Activated T-helper 1 cell treated with anti-CD3 and anti-CD28 coated beads, Interleukin-12 subunit alpha, Interleukin-12 subunit beta, Interleukin-2, Interleukin-4 antibody, amounts not matched to agents 30 ng/mL and 10 ng/mL and 1 ng/mL, durations not matched to agents 14 hours and 24 hours and 36 hours (primary cell): ENCODE measurements at regions of chr17 and their contacts with region 1.

Region 1: GRCh38 chr17:979538-980405 is at the start of gene NXN:
- DNase-seq: peak; percentile 81
- H3K4me3 Mint-ChIP-seq: peak within 1 kb of the TSS; percentile 78
- H3K27ac Mint-ChIP-seq: peak within 1 kb of the TSS; percentile 55
- H3K4me1 Mint-ChIP-seq: peaks cover 14% of the 10 kb centered on the region
- H3K27me3 Mint-ChIP-seq: peaks cover 33% of the 10 kb centered on the region
- total RNA-seq, gene NXN: 0.24 and 0.31 TPM in 2 replicates

Region 2: DNA sequence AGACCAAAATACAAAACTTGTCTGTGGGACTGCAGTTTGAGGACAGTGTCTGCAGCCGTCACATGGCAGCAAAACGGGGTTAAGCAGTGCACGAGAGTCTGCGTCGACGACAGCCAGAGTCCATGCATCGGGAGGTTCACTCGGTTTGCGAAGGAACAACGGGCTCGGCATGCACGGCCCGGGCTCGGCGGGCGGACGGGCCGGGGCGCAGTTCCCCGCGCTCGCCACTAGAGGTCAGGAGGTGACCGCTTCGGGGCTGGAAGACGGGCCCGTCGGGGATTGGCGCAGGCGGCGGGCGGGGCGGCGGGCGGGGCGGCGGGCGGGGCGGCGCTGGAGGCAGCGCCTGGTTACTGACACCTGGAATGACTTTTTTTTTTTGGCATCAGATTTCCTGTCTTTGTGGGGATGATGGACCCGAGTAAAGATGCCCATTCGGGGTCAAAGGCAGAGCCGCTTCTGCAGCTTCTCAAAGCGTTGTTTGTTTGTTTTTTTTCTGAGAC is 835.9 kb before region 1 on chr17:
- intact Hi-C with region 1: loop called (anchors 5 kb)
- DNase-seq: peak; percentile 83
- H3K4me3 Mint-ChIP-seq: no peak overlapping the region
- H3K27ac Mint-ChIP-seq: no peak overlapping the region
- H3K4me1 Mint-ChIP-seq: no peaks in the 10 kb centered on the region
- H3K27me3 Mint-ChIP-seq: peaks cover 9% of the 10 kb centered on the region

Region 3: DNA sequence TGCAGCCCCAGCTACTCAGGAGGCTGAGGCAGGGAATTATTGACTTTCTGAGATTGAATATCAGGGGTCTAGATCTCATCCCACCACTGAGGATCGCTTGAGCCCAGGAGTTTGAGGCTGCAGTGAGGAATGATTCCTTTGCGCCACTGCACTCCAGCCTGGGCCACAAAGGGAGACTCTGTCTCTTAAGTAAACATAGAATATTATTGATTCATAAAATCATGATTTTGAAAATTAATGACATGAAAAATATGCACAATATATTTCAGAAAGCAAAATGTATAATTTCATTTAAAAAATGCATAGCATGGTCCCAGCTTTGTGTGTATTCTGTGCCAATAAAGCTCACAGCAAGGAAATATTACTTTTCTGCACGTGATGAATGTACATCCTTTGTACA is 263.5 kb before region 1 on chr17:
- intact Hi-C with region 1: loop called (anchors 1 kb)
- DNase-seq: no peak
- H3K4me3 Mint-ChIP-seq: peak overlapping the region; percentile 26
- H3K27ac Mint-ChIP-seq: no peak overlapping the region
- H3K4me1 Mint-ChIP-seq: peaks cover 13% of the 10 kb centered on the region
- H3K27me3 Mint-ChIP-seq: peaks cover 8% of the 10 kb centered on the region

Region 4: DNA sequence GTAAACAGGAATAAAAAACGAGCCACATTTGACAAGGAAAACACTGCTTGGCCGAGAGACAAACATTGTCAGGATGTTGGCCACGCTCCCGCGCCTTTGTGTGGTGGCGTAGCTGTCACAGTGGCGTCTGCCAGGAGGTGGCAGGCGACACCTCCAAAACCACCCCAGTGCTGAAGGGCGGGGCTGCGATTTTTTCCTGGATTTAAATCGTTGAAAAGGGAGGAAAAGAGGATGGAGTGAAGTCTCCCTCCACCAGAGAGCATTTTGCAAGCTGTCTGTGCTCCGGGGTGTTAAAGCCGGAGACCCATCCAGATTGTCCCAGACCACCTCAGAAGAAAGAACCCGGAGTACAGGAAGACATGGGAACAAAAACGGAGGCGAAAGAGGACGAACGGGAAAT is 184.9 kb before region 1 on chr17:
- intact Hi-C with region 1: loop called (anchors 1 kb)
- DNase-seq: peak; percentile 5
- H3K4me3 Mint-ChIP-seq: no peak overlapping the region
- H3K27ac Mint-ChIP-seq: no peak overlapping the region
- H3K4me1 Mint-ChIP-seq: peaks cover 6% of the 10 kb centered on the region
- H3K27me3 Mint-ChIP-seq: no peaks in the 10 kb centered on the region

Region 5: GRCh38 chr17:996554-997344 is 17.0 kb after region 1 on chr17 and contains the start of gene TIMM22:
- intact Hi-C with region 1: loop called (anchors 1 kb)
- DNase-seq: peak; percentile 89
- H3K4me3 Mint-ChIP-seq: peak within 1 kb of the TSS; percentile 91
- H3K27ac Mint-ChIP-seq: peak within 1 kb of the TSS; percentile 96
- H3K4me1 Mint-ChIP-seq: peaks cover 25% of the 10 kb centered on the region
- H3K27me3 Mint-ChIP-seq: no peaks in the 10 kb centered on the region
- total RNA-seq, gene TIMM22: 14.6 and 17.3 TPM in 2 replicates